PC-9 (cell line): ENCODE measurements at regions of chr2 and their contacts with region 1.

Region 1: GRCh38 chr2:224392545-224392944 is 9.4 kb downstream of the FAM124B start:
- DNase-seq: no peak
- H3K4me3 ChIP-seq: no peak overlapping the region
- H3K27ac ChIP-seq: no peak overlapping the region
- H3K4me1 ChIP-seq: no peaks in the 10 kb centered on the region
- H3K27me3 ChIP-seq: no peaks in the 10 kb centered on the region
- CTCF ChIP-seq: no peak

Region 2: DNA sequence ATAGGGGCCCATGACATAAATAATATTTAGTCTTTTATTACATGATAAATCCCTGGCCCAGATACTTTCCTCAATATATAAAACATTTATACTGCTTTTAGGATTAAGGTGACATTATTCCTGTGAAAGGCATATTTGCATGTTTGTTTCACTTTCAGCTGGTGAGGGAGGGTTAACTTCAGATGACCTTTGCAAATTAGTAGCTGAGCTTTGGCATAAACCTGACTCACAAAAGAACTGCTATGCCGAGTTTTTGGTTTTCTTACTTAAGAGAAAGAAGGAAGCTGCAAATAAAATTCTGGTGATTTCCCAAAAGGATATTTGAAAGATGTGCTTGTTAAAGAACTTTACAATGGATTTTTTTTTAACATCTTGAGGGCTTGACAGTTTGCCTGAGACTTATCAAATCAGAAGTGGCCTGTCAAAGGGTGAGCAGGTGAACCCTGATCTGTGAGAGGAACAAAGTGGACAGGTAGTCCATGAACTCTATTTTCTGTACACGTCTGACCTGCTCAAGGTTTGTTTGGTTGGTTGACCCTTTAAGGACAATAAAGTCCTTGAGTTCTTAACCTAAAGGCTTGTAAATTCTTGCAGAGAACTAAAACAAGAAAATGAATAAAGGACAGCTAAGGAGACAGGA is 84.2 kb before region 1 on chr2:
- CTCF ChIA-PET with region 1: no interaction called
- POLR2A ChIA-PET with region 1: interaction called, 12 read pairs
- intact Hi-C with region 1: no loop called
- DNase-seq: no peak
- H3K4me3 ChIP-seq: no peak overlapping the region
- H3K27ac ChIP-seq: no peak overlapping the region
- H3K4me1 ChIP-seq: no peaks in the 10 kb centered on the region
- H3K27me3 ChIP-seq: no peaks in the 10 kb centered on the region
- CTCF ChIP-seq: no peak